GM12878 (cell line): ENCODE measurements at regions of chr7 and their contacts with region 1.

Region 1: DNA sequence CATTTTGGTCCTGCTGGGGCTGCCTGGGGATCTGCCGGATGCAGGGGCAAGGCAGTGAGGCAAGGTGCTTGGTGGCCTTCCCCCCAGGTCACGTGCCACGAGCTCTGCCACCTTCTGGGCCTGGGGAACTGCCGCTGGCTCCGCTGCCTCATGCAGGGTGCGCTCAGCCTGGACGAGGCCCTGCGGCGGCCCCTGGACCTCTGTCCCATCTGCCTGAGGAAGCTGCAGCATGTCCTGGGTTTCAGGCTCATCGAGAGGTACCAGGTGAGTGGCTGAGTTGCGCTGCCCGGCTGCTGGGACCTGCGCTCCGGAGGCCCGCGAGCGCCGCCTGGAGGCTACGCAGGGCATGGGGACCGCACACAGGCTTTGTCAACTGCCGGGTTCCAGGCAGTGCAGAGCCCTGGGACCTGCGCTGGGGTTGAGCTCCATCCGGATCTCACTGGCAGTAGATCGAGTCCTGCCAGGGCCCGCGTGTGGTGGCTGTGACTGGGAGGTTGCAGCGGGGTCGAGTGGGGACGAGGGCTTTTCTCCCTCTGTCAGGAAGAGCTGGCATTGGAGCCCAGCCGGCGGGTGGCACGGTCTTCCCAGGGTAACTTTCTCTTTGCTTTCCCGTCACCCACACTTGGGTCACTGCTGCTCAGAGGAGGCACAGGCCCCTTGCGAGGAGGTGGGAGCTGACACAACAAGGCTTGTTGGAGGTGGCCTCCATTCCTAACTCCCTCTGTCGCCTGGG is 21.7 kb downstream of the AMZ1 start:
- DNase-seq: peak; percentile 61
- ATAC-seq: peak; percentile 86
- H3K4me3 ChIP-seq: peak overlapping the region; percentile 56
- H3K27ac ChIP-seq: peak overlapping the region; percentile 89
- H3K4me1 ChIP-seq: peaks cover 28% of the 10 kb centered on the region
- H3K27me3 ChIP-seq: no peaks in the 10 kb centered on the region
- CTCF ChIP-seq: peak; percentile 95 to 100 (median 100); a peak in 5 of 6 replicates
- EP300 ChIP-seq: no peak
- POLR2A ChIP-seq: peak; percentile 68
- RAD21 ChIP-seq: peak; percentile 93

Region 2: GRCh38 chr7:1569833-1570633 is 1139.7 kb before region 1 on chr7 and contains the start of gene PSMG3:
- CTCF ChIA-PET with region 1: no interaction called
- POLR2A ChIA-PET with region 1: no interaction called
- RAD21 ChIA-PET with region 1: no interaction called
- SMC1A ChIA-PET with region 1: no interaction called
- in situ Hi-C with region 1: no loop called
- intact Hi-C with region 1: no loop called
- DNase-seq: peak; percentile 32
- ATAC-seq: peak; percentile 94
- H3K4me3 ChIP-seq: peak within 1 kb of the TSS; percentile 97
- H3K27ac ChIP-seq: peak within 1 kb of the TSS; percentile 91
- H3K4me1 ChIP-seq: no peaks in the 10 kb centered on the region; the same call in 1 of the 2 replicates
- H3K27me3 ChIP-seq: no peaks in the 10 kb centered on the region
- CTCF ChIP-seq: peak; percentile 11 to 35 (median 27); a peak in 4 of 6 replicates
- EP300 ChIP-seq: no peak
- POLR2A ChIP-seq: peak; percentile 80
- RAD21 ChIP-seq: no peak
- polyA plus RNA-seq, gene PSMG3: 23.9 to 40.5 TPM

Region 3: GRCh38 chr7:2567679-2568278 is 141.9 kb before region 1 on chr7:
- CTCF ChIA-PET with region 1: interaction called, 28 read pairs
- POLR2A ChIA-PET with region 1: no interaction called
- RAD21 ChIA-PET with region 1: interaction called, 28 read pairs
- SMC1A ChIA-PET with region 1: interaction called, 29 read pairs
- in situ Hi-C with region 1: no loop called
- intact Hi-C with region 1: loop called (anchors 2 kb)
- DNase-seq: no peak
- ATAC-seq: peak; percentile 69
- H3K4me3 ChIP-seq: 0 out of 2 replicates have a peak overlapping the region, but pooled peaks have one; percentile 54
- H3K27ac ChIP-seq: no peak overlapping the region
- H3K4me1 ChIP-seq: peaks cover 23% of the 10 kb centered on the region
- H3K27me3 ChIP-seq: no peaks in the 10 kb centered on the region
- CTCF ChIP-seq: peak; percentile 43 to 59 (median 55)
- EP300 ChIP-seq: no peak
- POLR2A ChIP-seq: no peak
- RAD21 ChIP-seq: peak; percentile 56

Region 4: DNA sequence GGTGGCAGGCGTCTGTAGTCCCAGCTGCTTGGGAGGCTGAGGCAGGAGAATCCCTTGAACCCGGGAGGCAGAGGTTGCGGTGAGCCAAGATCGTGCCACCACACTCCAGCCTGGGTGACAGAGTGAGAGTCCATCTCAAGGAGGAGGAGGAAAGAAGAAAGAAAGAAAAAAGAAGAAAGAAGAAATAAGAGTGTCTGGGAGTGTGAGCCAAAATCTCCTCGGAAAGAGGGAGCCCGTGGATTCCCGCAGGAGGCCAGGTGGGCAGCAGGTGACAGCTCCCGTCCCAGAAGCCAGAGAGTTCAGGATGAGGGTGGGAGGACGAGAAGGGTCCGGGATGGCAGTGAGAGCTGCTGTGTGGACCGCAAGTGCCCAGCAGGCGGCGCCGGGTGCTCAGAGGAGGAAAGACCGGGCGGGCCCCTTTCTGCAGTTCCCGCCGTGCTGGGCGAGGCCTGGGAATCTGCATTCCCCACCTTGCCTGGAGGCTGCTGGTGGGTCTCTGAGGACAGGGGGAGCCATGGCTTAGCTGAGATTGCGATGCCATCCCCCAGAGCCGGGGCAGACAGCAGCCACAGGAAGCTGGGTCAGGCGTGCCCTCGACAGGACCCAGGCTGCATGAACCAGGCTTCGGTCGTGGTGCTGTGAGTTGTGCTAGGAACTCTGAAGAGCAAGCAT is 38.9 kb before region 1 on chr7:
- CTCF ChIA-PET with region 1: interaction called, 154 read pairs
- POLR2A ChIA-PET with region 1: interaction called, 18 read pairs
- RAD21 ChIA-PET with region 1: interaction called, 89 read pairs
- SMC1A ChIA-PET with region 1: interaction called, 113 read pairs
- in situ Hi-C with region 1: loop called (anchors 5 kb)
- intact Hi-C with region 1: loop called (anchors 1 kb)
- DNase-seq: no peak
- ATAC-seq: peak; percentile 97
- H3K4me3 ChIP-seq: no peak overlapping the region
- H3K27ac ChIP-seq: no peak overlapping the region
- H3K4me1 ChIP-seq: peaks cover 4% of the 10 kb centered on the region; the same call in 1 of the 2 replicates
- H3K27me3 ChIP-seq: no peaks in the 10 kb centered on the region
- CTCF ChIP-seq: peak; percentile 88 to 97 (median 94)
- EP300 ChIP-seq: no peak
- POLR2A ChIP-seq: no peak
- RAD21 ChIP-seq: peak; percentile 95

Region 5: DNA sequence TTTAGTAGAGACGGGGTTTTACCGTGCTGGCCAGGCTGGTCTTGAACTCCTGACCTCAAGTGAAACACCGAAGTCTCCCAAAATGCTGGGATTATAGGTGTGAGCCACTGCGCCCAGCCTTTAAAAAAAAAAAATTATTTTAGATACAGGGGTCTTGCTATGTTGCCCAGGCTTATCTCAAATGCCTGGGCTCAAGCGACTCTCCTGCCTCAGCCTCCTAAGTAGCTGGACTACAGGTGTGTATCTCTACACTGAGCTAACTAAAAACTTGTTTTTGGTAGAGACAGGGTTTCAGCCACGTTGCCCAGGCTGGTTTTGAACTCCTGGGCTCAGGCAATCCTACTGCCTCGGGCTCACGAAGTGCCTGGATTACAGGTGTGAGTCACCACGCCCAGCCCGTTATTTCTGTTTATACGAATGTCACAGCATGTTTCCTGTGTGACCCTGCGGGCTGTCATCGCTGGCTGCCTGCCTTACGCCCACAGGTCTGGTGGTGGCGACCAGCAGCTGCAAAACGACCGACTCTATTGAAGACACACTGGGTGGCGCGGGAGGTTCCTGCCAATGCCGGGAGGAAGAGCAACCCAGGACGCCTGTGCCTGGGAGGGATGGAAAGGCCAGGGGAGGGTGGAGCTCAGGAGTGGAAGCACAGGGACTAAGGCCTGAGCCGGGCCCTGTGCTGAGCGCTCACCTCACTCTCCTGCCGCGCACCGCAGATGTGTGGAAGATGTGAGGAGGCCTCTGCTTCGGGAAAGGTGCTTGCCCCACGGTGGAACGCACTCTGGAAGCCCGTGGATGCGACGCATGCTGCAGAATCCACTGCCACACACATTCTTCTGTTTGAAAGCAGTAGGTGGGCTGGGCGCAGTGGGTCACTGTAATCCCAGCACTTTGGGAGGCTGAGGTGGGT is 11.1 kb after region 1 on chr7:
- CTCF ChIA-PET with region 1: interaction called, 54 read pairs
- POLR2A ChIA-PET with region 1: no interaction called
- RAD21 ChIA-PET with region 1: interaction called, 10 read pairs
- SMC1A ChIA-PET with region 1: interaction called, 10 read pairs
- in situ Hi-C with region 1: no loop called
- intact Hi-C with region 1: no loop called
- DNase-seq: no peak
- ATAC-seq: peak; percentile 79
- H3K4me3 ChIP-seq: no peak overlapping the region
- H3K27ac ChIP-seq: no peak overlapping the region
- H3K4me1 ChIP-seq: peaks cover 22% of the 10 kb centered on the region
- H3K27me3 ChIP-seq: no peaks in the 10 kb centered on the region
- CTCF ChIP-seq: peak in 1 of 3 experiments; percentile 37; a peak in 1 of 6 replicates
- EP300 ChIP-seq: no peak
- POLR2A ChIP-seq: no peak
- RAD21 ChIP-seq: no peak

Region 6: GRCh38 chr7:2800931-2801688 is 91.4 kb after region 1 on chr7:
- CTCF ChIA-PET with region 1: interaction called, 12 read pairs
- POLR2A ChIA-PET with region 1: interaction called, 5 read pairs
- RAD21 ChIA-PET with region 1: interaction called, 16 read pairs
- SMC1A ChIA-PET with region 1: interaction called, 6 read pairs
- in situ Hi-C with region 1: no loop called
- intact Hi-C with region 1: no loop called
- DNase-seq: no peak
- ATAC-seq: peak; percentile 45
- H3K4me3 ChIP-seq: no peak overlapping the region
- H3K27ac ChIP-seq: no peak overlapping the region
- H3K4me1 ChIP-seq: peaks cover 8% of the 10 kb centered on the region; the same call in 1 of the 2 replicates
- H3K27me3 ChIP-seq: no peaks in the 10 kb centered on the region
- CTCF ChIP-seq: no peak
- EP300 ChIP-seq: no peak
- POLR2A ChIP-seq: no peak
- RAD21 ChIP-seq: no peak

Region 7: DNA sequence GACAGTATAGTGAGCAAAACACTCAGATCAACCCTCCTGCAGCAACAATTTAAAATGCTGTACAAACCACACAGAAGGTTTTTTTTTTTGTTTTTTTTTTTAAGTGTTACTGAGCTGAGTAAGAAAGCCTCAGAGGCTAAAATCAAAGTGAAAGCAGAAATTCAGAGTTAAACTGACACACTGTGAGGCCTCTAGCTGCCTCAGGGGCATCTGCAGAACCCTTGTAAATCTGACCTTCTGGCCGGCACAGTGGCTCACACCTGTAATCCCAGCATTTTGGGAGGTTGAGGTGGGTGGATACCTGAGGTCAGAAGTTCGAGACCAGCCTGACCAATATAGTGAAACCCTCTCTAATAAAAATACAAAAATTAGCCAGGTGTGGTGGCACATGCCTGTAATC is 141.8 kb after region 1 on chr7:
- CTCF ChIA-PET with region 1: interaction called, 15 read pairs
- POLR2A ChIA-PET with region 1: no interaction called
- RAD21 ChIA-PET with region 1: interaction called, 8 read pairs
- SMC1A ChIA-PET with region 1: interaction called, 25 read pairs
- in situ Hi-C with region 1: no loop called
- intact Hi-C with region 1: no loop called
- DNase-seq: no peak
- ATAC-seq: peak; percentile 92
- H3K4me3 ChIP-seq: no peak overlapping the region
- H3K27ac ChIP-seq: 0 out of 2 replicates have a peak overlapping the region, but pooled peaks have one; percentile 18
- H3K4me1 ChIP-seq: peaks cover 6% of the 10 kb centered on the region
- H3K27me3 ChIP-seq: no peaks in the 10 kb centered on the region
- CTCF ChIP-seq: no peak
- EP300 ChIP-seq: no peak
- POLR2A ChIP-seq: no peak
- RAD21 ChIP-seq: no peak